MCF 10A (cell line): ENCODE measurements at regions of chr5 and their contacts with region 1.

Region 1: DNA sequence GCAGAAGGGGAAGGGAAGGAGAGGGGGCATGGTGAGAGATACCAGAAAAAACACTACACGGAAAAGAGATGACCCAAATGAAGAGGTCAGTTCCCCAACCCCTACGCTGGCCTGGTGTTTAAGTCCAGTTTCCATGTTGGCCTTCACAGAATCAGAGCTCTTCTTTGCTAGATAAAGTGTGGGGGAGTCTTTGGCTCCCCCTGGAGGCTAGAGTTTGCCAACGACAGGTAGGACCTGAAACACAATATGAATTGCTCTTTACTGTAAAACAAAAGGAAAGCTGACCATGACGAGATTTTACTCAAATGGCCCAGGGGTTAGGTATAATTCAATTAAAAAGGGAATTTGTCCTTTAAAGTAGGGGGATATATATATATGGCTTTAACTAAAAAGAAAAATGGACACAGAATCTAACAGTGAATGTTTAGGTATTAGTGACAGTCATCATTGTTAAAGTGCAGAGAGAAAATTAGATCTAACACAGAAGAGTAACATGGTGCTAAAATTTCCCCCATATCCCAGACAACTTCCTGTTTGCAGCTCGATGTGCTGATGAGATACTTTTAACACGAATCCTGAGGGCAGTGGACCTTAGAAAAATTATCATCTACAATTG is 92.0 kb downstream of the SV2C start:
- DNase-seq: peak; percentile 69
- H3K4me3 Mint-ChIP-seq: no peak overlapping the region
- H3K27ac Mint-ChIP-seq: no peak overlapping the region
- H3K4me1 Mint-ChIP-seq: no peaks in the 10 kb centered on the region
- H3K27me3 Mint-ChIP-seq: no peaks in the 10 kb centered on the region
- CTCF ChIP-seq: peak; percentile 81

Region 2: GRCh38 chr5:75734913-75735789 is 440.0 kb before region 1 on chr5:
- CTCF ChIA-PET with region 1: interaction called, 21 read pairs
- POLR2A ChIA-PET with region 1: interaction called, 3 read pairs
- intact Hi-C with region 1: loop called (anchors 2 kb)
- DNase-seq: peak; percentile 52
- H3K4me3 Mint-ChIP-seq: no peak overlapping the region
- H3K27ac Mint-ChIP-seq: no peak overlapping the region
- H3K4me1 Mint-ChIP-seq: no peaks in the 10 kb centered on the region
- H3K27me3 Mint-ChIP-seq: peaks cover 49% of the 10 kb centered on the region
- CTCF ChIP-seq: peak; percentile 35

Region 3: GRCh38 chr5:76134546-76135045 is 40.6 kb before region 1 on chr5:
- CTCF ChIA-PET with region 1: interaction called, 10 read pairs
- POLR2A ChIA-PET with region 1: no interaction called
- intact Hi-C with region 1: no loop called
- DNase-seq: no peak
- H3K4me3 Mint-ChIP-seq: no peak overlapping the region
- H3K27ac Mint-ChIP-seq: no peak overlapping the region
- H3K4me1 Mint-ChIP-seq: no peaks in the 10 kb centered on the region
- H3K27me3 Mint-ChIP-seq: peaks cover 69% of the 10 kb centered on the region
- CTCF ChIP-seq: no peak

Region 4: GRCh38 chr5:76145945-76146344 is 29.2 kb before region 1 on chr5:
- CTCF ChIA-PET with region 1: interaction called, 11 read pairs
- POLR2A ChIA-PET with region 1: no interaction called
- intact Hi-C with region 1: no loop called
- DNase-seq: peak; percentile 36
- H3K4me3 Mint-ChIP-seq: no peak overlapping the region
- H3K27ac Mint-ChIP-seq: no peak overlapping the region
- H3K4me1 Mint-ChIP-seq: no peaks in the 10 kb centered on the region
- H3K27me3 Mint-ChIP-seq: no peaks in the 10 kb centered on the region
- CTCF ChIP-seq: no peak

Region 5: DNA sequence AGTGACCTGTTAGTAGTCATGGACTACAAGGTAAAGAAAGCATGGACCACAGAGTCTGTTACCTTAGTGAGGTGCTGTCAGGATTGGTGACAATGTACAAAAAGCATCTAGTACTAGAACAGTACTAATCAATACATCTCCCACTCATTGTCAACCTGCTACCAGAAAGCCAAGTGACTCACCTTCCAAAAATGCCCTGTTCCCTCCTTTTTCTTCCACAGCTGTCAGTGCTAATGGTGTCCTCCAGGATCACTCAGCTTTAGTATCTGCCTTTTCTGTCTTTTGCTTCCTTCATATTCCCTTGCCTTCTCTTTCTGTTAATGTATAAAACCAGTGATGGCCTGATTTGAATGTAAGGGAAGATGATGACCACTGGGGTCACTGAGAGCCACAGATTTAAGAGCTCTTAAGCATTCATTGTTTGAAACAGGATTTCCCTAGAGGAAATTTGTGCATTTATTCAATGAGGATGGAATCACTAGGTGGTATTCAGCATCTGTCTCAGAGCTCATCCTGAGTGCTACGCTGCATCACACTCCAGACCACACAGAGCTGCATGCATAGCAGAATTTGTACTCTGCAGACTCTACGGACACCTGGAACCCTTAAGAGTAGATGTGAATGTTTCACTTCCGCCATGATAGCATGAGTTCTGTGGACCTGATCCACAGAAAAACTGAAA is 21.0 kb before region 1 on chr5:
- CTCF ChIA-PET with region 1: interaction called, 39 read pairs
- POLR2A ChIA-PET with region 1: interaction called, 4 read pairs
- intact Hi-C with region 1: no loop called
- DNase-seq: no peak
- H3K4me3 Mint-ChIP-seq: no peak overlapping the region
- H3K27ac Mint-ChIP-seq: no peak overlapping the region
- H3K4me1 Mint-ChIP-seq: no peaks in the 10 kb centered on the region
- H3K27me3 Mint-ChIP-seq: peaks cover 28% of the 10 kb centered on the region
- CTCF ChIP-seq: no peak

Region 6: DNA sequence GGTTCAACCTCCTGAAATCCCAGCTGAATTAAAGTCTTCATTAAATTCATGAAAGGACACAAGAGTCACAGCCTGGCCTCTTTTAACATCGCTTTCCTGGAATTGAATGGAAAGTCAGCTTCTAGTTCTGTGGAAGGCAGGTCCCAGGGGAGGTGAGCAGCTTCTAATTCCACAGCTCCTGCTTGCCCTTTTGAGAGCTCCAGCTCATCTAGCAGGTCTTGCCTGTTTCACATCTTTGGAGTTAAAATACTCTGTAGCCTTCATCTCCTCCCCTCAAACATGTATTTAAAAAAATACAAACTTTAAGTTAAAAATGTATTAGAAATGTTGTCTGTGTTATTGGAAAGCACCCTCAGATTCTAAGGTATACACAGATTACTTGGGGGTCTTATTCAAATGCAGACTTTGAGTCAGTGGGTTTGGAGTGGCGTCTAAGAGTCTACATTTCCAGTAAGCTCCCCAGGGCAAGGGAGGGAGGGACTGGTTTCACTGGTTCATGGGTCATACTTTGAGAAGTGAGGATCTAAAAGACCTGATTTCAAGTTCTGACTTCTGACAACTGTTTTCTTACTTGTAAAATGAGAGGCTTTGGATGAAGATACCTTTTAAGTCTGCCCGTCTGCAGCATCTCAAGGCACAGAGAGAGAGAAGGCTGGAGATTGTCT is 16.8 kb after region 1 on chr5:
- CTCF ChIA-PET with region 1: interaction called, 16 read pairs
- POLR2A ChIA-PET with region 1: no interaction called
- intact Hi-C with region 1: no loop called
- DNase-seq: no peak
- H3K4me3 Mint-ChIP-seq: no peak overlapping the region
- H3K27ac Mint-ChIP-seq: no peak overlapping the region
- H3K4me1 Mint-ChIP-seq: no peaks in the 10 kb centered on the region
- H3K27me3 Mint-ChIP-seq: peaks cover 65% of the 10 kb centered on the region
- CTCF ChIP-seq: no peak